WTC11 (cell line): ENCODE measurements at regions of chr14 and their contacts with region 1.

Region 1: DNA sequence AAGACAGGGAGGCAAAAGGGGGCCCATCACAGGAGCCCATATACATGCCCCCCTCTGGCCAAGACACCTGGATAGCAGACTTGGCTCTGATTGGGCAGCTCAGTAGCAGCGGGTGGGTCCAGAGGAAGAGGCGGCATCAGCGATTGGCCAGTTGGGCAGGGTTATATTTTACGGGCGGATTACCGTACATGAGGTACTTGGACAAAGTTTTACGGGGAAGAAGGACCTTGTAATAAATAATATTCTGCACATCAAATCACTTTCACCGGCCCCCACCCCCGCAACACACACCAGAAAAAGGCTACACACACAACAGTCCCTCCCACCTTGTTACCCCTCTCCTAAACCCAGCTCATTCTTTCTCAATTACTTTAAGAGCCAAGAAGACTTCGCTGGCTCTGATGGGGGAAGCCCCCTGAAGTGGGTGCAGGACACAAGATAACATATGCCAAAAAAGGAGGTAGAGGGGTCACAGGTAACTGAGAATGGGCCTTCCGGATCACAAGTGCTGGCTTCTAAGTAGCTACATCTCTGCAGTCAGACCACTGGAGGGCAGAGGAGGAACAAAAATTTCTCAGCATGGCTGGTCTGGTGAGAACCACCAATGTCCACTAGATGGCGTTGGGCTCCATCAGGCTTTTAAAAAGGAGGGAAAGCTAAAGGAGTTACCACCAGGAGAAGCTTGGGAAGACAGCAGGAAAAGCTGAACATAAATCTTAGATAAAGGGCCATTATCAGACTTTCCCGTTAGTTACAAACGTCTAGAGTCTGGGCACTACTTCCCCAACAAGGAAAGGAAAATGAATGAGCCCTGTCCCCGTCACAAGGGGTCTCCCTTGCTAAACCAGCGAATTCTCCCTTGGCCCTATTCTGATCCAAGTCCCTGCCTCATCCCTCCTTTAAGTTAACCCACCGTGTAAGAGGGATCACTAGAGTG is 11.4 kb upstream of the CDH24 start:
- DNase-seq: peak; percentile 86
- ATAC-seq: peak; percentile 70
- H3K4me3 Mint-ChIP-seq: peak overlapping the region; percentile 48
- H3K27ac Mint-ChIP-seq: peak overlapping the region; percentile 71; the same call in 1 of the 2 replicates
- H3K4me1 Mint-ChIP-seq: peaks cover 38% of the 10 kb centered on the region
- H3K27me3 Mint-ChIP-seq: no peaks in the 10 kb centered on the region
- CTCF ChIP-seq: peak; percentile 74

Region 2: GRCh38 chr14:22929104-22929847 is 139.5 kb before region 1 on chr14 and contains the start of gene PRMT5:
- CTCF ChIA-PET with region 1: interaction called, 17 read pairs
- POLR2A ChIA-PET with region 1: interaction called, 6 read pairs
- DNase-seq: peak; percentile 97
- ATAC-seq: peak; percentile 96
- H3K4me3 Mint-ChIP-seq: no peak within 1 kb of the TSS
- H3K27ac Mint-ChIP-seq: no peak within 1 kb of the TSS; the same call in 1 of the 2 replicates
- H3K4me1 Mint-ChIP-seq: peaks cover 7% of the 10 kb centered on the region
- H3K27me3 Mint-ChIP-seq: no peaks in the 10 kb centered on the region
- CTCF ChIP-seq: no peak
- total RNA-seq, gene PRMT5: 119 to 124 TPM (median 123 TPM) in 3 replicates

Region 3: GRCh38 chr14:22994762-22995275 is 73.9 kb before region 1 on chr14:
- CTCF ChIA-PET with region 1: interaction called, 34 read pairs
- POLR2A ChIA-PET with region 1: interaction called, 5 read pairs
- DNase-seq: peak; percentile 32
- ATAC-seq: peak; percentile 87
- H3K4me3 Mint-ChIP-seq: no peak overlapping the region
- H3K27ac Mint-ChIP-seq: peak overlapping the region; percentile 91
- H3K4me1 Mint-ChIP-seq: peaks cover 5% of the 10 kb centered on the region
- H3K27me3 Mint-ChIP-seq: no peaks in the 10 kb centered on the region; the same call in 1 of the 2 replicates
- CTCF ChIP-seq: 0 out of 2 replicates have a peak, but pooled peaks have one; percentile 14

Region 4: DNA sequence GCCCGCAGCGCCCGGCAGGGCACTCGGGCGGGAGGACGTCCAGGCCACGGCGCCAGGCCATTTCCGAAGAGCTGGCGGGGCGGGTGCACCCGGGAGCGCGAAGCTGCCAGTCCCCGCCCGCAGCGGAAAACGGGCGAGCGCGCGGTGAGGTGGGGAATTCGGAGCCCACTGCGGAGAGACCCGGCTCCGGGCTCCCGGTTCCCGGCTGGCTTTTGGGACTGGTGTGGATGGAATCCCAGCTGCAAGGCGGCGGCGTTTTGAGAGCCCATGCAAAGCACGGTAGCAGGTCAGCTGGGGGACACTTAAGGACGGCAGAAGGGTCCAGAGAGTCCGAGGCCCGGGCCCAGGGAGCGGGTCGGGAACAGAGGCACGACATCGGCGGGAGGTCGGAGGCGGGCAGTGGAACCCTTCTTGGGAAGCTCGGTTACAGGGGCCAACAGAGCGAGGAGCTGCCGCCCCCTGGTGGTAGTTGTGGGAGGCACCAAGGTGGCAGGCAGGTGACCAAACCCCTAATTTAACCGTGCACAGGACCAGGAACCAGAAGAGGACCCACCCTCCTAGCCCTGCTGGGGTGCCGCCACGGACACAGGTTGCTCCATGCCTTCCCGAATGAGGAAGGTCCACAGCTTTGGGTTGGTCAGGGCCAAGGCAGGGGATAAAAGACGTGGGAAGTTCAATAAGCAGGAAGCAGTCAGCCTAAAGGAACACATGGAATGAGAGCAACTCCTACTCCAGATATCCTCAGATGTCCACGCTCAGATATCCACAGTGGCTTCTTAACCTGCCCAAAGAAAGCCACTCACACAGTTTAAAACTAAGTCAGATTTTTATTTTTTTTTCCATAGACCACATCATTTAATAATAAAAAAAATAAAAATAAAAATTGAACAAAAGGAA is 10.7 kb before region 1 on chr14:
- CTCF ChIA-PET with region 1: interaction called, 160 read pairs
- POLR2A ChIA-PET with region 1: interaction called, 12 read pairs
- DNase-seq: peak; percentile 96
- ATAC-seq: peak; percentile 66
- H3K4me3 Mint-ChIP-seq: peak overlapping the region; percentile 83
- H3K27ac Mint-ChIP-seq: peak overlapping the region; percentile 91
- H3K4me1 Mint-ChIP-seq: peaks cover 12% of the 10 kb centered on the region
- H3K27me3 Mint-ChIP-seq: peaks cover 5% of the 10 kb centered on the region; the same call in 1 of the 2 replicates
- CTCF ChIP-seq: peak; percentile 97

Region 5: GRCh38 chr14:23114669-23115491 is 46.1 kb after region 1 on chr14:
- CTCF ChIA-PET with region 1: interaction called, 37 read pairs
- POLR2A ChIA-PET with region 1: no interaction called
- DNase-seq: no peak
- ATAC-seq: no peak
- H3K4me3 Mint-ChIP-seq: no peak overlapping the region
- H3K27ac Mint-ChIP-seq: no peak overlapping the region
- H3K4me1 Mint-ChIP-seq: peaks cover 29% of the 10 kb centered on the region
- H3K27me3 Mint-ChIP-seq: peaks cover 22% of the 10 kb centered on the region
- CTCF ChIP-seq: no peak

Region 6: GRCh38 chr14:23174276-23175184 is 105.8 kb after region 1 on chr14:
- CTCF ChIA-PET with region 1: interaction called, 10 read pairs
- POLR2A ChIA-PET with region 1: no interaction called
- DNase-seq: no peak
- ATAC-seq: peak; percentile 81
- H3K4me3 Mint-ChIP-seq: peak overlapping the region; percentile 12; the same call in 1 of the 2 replicates
- H3K27ac Mint-ChIP-seq: peak overlapping the region; percentile 92
- H3K4me1 Mint-ChIP-seq: peaks cover 67% of the 10 kb centered on the region
- H3K27me3 Mint-ChIP-seq: no peaks in the 10 kb centered on the region
- CTCF ChIP-seq: no peak

Region 7: GRCh38 chr14:23269193-23269592 is 200.4 kb after region 1 on chr14:
- CTCF ChIA-PET with region 1: no interaction called
- POLR2A ChIA-PET with region 1: no interaction called
- DNase-seq: no peak
- ATAC-seq: no peak
- H3K4me3 Mint-ChIP-seq: no peak overlapping the region
- H3K27ac Mint-ChIP-seq: no peak overlapping the region
- H3K4me1 Mint-ChIP-seq: no peaks in the 10 kb centered on the region
- H3K27me3 Mint-ChIP-seq: peaks cover 95% of the 10 kb centered on the region
- CTCF ChIP-seq: no peak

Region 8: GRCh38 chr14:23379366-23380196 is 310.8 kb after region 1 on chr14:
- CTCF ChIA-PET with region 1: interaction called, 13 read pairs
- POLR2A ChIA-PET with region 1: no interaction called
- DNase-seq: peak; percentile 76
- ATAC-seq: peak; percentile 63
- H3K4me3 Mint-ChIP-seq: no peak overlapping the region
- H3K27ac Mint-ChIP-seq: no peak overlapping the region
- H3K4me1 Mint-ChIP-seq: peaks cover 11% of the 10 kb centered on the region
- H3K27me3 Mint-ChIP-seq: peaks cover 59% of the 10 kb centered on the region
- CTCF ChIP-seq: peak; percentile 93

Region 9: DNA sequence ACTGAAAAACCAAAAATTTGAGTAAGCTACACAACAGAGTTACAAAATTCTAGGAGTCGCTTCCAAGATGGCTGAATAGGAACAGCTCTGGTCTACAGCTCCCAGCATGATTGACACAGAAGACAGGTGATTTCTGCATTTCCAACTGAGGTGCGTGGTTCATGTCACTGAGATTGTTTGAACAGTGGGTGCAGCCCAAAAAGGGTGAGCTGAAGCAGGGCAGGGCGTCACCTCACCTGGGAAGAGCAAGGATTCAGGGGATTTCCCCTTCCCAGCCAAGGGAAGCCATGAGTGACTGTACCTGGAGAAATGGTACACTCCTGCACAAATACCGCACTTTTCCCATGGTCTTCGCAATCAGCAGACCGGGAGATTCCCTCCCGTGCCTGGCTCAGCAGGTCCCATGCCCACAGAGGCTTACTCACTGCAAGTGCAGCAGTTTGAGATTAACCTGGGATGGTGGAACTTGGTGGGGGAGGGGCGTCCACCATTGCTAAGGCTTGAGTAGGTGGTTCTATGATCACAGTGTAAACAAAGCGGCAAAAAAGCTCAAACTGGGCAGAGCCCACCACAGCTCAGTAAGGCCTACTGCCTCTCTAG is 873.7 kb after region 1 on chr14:
- CTCF ChIA-PET with region 1: no interaction called
- POLR2A ChIA-PET with region 1: no interaction called
- DNase-seq: no peak
- ATAC-seq: no peak
- H3K4me3 Mint-ChIP-seq: no peak overlapping the region
- H3K27ac Mint-ChIP-seq: no peak overlapping the region
- H3K4me1 Mint-ChIP-seq: 0 out of 2 replicates have a peak, but pooled peaks cover 4% of the 10 kb centered on the region
- H3K27me3 Mint-ChIP-seq: no peaks in the 10 kb centered on the region
- CTCF ChIP-seq: no peak